ENCODE measurements at regions of chr17 and their contacts with region 1.

Region 1: DNA sequence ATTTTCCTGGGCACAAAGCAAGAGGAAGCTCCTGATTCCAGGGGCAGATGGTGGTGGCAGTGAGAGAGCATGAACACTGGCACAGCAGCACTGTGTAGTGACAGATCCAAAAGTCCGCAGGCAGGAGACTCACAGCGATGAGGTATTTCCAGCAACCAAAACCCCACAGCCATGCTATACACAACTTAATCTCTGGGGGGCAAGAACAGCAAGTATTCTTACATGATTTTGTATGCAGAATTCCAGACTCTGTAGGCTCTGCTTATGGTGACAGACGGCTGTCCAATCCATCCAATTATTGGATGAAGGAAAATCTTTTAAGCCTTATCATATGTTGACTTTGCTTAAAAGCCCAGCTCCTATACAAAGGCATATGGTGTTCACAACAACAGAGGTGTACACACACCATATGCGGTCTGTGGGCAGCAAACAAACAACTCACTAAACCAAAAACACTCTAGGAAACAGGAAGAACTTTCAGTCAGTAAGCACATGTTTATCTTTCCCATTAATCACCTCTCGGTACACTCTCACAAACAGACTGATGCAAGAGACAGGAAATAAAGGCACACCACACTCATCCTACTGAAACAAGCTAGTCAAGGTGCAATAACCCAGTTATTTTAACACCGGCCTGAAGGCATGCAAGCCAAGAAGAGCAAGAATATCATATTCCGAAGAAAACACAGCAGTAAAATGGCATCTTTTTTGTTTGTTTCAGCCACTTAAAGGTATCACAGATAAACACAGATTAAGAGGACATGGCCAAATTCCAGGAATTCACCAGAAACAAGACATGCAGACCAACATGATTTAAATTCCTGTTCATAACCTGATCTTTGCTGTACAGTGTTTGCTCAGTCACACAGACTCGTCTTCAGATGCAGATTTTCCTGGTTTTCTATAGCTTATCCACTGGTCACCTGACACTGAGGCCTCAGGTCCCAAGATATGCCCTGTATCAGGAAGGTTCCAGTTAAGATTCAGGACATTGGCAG is 47.8 kb downstream of the ERN1 start:
- DNase-seq: peak; percentile 63
- ATAC-seq: peak; percentile 88
- H3K4me3 Mint-ChIP-seq: peak overlapping the region; percentile 45
- H3K27ac Mint-ChIP-seq: no peak overlapping the region
- H3K4me1 Mint-ChIP-seq: peaks cover 20% of the 10 kb centered on the region
- H3K27me3 Mint-ChIP-seq: no peaks in the 10 kb centered on the region
- CTCF ChIP-seq: peak; percentile 36

Region 2: GRCh38 chr17:64117981-64118979 is 36.2 kb after region 1 on chr17:
- CTCF ChIA-PET with region 1: interaction called, 3 read pairs
- POLR2A ChIA-PET with region 1: no interaction called
- intact Hi-C with region 1: loop called (anchors 5 kb)
- DNase-seq: no peak
- ATAC-seq: no peak
- H3K4me3 Mint-ChIP-seq: no peak overlapping the region
- H3K27ac Mint-ChIP-seq: peak overlapping the region; percentile 82
- H3K4me1 Mint-ChIP-seq: peaks cover 75% of the 10 kb centered on the region
- H3K27me3 Mint-ChIP-seq: no peaks in the 10 kb centered on the region
- CTCF ChIP-seq: no peak

Measured in activated CD8-positive, alpha-beta T cell treated with anti-CD3 and anti-CD28 coated beads for 36 hours (primary cell).